ENCODE measurements at regions of chr12 and their contacts with region 1.

Region 1: DNA sequence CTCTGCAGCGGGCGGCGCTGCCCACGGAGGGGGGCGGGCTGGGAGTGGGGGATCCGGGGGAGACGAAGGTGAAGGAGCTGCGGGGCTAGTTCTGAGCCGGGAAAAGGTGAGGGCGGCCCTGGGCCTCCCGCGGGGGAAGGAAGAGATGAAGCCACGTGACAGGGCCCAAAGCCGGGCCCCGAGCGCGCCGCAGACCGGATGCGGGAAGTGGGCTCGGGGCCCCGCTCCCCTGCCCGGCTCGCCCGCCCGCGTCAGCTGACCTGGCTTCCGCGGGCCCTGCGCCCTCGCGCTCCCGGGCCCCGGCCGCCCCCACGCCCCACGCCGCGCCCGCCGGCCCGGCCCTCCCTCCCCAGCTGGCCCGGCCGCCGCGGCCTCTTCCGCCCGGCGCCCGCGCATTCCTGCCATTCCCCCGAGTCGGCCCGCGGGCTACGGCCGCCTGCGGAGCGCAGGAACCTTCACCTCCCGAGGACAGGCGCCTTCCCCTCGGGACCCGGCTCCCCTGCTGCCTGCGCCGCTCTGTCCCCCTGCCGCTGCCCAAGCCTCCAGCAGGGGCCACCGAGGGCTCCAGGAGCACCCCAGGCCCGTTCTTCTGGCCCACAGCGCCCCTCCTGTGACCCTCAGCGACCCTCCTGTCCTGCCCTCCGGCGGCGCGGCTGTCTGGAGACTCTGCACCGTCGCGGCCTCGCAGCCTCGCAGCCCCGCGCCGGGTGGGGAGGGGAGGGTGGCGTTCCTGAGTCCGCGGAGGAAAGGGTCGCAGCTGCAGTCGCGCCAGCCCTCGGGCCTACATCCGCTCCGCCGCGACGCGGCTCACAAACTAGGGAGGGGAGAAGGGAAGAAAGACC is 20.4 kb downstream of the NINJ2 start:
- DNase-seq: peak; percentile 93

Region 2: GRCh38 chr12:503111-503761 is 139.6 kb before region 1 on chr12:
- intact Hi-C with region 1: no loop called
- DNase-seq: peak; percentile 63

Region 3: DNA sequence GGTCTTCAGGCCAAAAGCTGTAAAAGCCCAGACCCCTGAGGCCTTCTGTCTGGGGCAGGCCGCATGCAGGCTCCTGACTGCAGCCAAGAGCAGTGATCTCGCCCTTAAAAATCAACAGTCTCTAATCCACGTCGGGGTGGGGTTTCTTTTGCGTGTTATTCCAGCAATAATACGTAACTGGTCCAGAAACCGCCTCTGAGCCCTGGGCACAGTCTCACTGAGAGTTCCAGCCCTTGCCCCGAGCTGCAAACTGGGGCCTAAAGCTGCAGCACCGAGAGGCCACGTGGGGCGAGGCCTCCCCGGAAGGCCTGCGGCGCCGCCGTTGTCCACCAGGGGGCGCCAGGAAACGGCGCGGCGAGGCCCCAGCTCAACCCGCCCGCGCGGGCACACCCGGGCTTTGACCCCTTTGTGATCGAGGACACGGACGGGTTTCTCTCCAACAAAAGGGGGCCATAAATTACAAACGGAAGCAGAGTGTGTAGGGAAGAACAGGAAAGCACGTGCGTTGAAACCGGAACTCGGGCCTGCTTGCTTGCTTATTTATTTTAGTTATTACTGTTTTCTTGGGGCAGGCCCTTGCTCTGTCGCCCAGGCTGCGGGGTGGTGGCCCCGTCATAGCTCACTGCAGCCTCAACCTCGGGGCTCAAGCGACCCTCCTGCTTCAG is 66.8 kb before region 1 on chr12:
- intact Hi-C with region 1: loop called (anchors 1 kb)
- DNase-seq: peak; percentile 94

Region 4: DNA sequence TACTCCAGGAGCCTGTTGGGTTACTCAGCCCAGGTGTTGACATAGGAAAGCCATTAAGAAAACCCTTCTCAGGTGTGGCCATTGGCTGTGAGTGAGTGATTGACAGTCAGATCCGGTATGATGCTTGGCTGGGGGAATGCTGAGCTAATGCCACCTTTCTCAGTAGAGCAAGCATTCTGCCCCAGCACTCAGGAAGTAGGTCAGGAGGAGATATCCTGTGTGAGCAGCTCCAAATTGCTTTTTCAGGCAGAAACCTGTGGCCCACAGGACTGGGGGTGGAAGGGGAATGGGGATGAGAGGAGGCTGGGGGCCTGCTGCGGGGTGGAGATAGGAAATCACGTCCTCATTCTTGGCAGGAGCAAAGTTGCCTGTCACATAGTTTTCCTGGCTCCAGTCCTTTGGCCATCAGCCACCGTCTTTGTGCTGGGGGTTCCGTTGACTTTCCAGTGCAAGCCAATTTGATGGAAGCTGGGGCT is 35.3 kb before region 1 on chr12:
- intact Hi-C with region 1: loop called (anchors 5 kb)
- DNase-seq: peak; percentile 85

Measured in cardiac septum (tissue), 1 donor.